ENCODE measurements at regions of chr19 and their contacts with region 1.

Region 1: GRCh38 chr19:52115526-52116053 is 20.0 kb upstream of the ZNF841 start:
- DNase-seq: no peak
- ATAC-seq: no peak
- H3K4me3 ChIP-seq: no peak overlapping the region
- H3K27ac ChIP-seq: no peak overlapping the region
- H3K4me1 ChIP-seq: no peaks in the 10 kb centered on the region
- H3K27me3 ChIP-seq: no peaks in the 10 kb centered on the region
- CTCF ChIP-seq: no peak

Region 2: DNA sequence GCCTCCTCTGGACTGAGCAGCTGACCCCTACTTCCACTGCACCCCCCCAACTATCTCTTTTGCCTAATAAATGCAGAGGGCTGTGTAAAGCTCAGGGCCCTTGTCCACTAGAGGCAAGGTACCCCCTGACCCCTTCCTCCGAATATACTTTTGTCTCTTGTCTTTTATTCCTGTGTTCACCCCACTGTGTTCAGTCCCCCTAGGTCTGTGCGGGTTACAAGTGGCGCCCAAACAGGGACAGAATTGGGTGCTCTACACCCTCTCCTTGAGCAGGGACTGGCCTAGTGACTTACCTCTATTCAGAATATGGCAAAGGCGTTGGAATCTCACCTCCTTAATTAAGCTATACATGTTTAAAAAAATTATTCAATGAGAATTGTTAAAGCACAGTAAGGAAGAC is 144.0 kb before region 1 on chr19:
- intact Hi-C with region 1: loop called in 1 of 10 experiments (anchors 10 kb)
- DNase-seq: no peak
- ATAC-seq: no peak
- H3K4me3 ChIP-seq: no peak overlapping the region
- H3K27ac ChIP-seq: no peak overlapping the region
- H3K4me1 ChIP-seq: no peaks in the 10 kb centered on the region
- H3K27me3 ChIP-seq: no peaks in the 10 kb centered on the region
- CTCF ChIP-seq: no peak

Region 3: DNA sequence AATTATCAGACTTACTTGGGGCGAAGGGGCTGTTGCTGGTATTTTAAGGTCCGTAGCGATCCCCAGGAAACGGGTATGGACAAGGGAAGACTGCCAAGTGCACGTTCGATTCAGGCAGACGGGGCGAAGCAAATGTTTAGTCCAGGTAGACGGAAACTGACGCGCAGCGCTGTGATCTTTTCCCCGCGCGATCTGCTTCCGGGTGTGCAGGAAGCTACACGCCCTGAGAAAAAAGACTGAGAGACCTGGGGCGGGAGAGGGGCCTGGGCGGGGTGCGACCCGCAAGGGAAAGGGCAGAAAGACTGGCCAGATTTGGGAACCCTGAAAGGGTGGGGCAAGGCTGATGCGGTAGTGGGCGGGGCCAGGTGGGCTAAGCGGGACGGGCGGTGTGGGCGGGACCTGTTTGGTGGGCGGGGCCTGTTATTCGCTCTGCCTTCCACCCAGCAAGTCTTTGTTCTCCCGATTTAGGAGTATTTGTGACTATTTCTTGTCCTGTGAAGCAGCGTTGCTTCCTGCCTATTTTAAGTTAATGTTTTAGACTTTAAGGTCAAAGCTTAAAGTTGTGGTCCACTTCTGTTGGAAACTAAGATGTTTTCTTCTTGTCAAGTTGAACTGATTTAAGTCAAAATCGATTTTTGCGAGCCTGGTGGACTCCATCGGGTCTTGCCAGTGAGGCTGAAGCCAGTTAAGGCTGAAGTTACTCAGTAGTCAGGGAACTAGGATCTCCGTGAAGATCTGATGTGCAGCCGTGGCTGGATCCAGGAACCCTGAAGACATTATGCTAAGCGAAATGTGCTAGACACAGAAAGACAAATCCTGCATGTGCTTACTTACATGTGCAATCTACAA is 56.0 kb after region 1 on chr19 and contains the start of gene ZNF836:
- intact Hi-C with region 1: no loop called
- DNase-seq: peak; percentile 92 to 93
- ATAC-seq: peak; percentile 96 to 99 (median 98)
- H3K4me3 ChIP-seq: peak within 1 kb of the TSS; percentile 74 to 95 (median 80)
- H3K27ac ChIP-seq: peak within 1 kb of the TSS; percentile 43 to 90 (median 85)
- H3K4me1 ChIP-seq: peaks cover 0 to 28% (median 14%) of the 10 kb centered on the region in 9 donors
- H3K27me3 ChIP-seq: no peaks in the 10 kb centered on the region
- CTCF ChIP-seq: no peak
- total RNA-seq, gene ZNF836: 5.1 to 10.6 (median 7.1) TPM